Activated B cell treated with CpG ODN at 0.5 μM for 24 hours (primary cell): ENCODE measurements at regions of chr15 and their contacts with region 1.

Region 1: DNA sequence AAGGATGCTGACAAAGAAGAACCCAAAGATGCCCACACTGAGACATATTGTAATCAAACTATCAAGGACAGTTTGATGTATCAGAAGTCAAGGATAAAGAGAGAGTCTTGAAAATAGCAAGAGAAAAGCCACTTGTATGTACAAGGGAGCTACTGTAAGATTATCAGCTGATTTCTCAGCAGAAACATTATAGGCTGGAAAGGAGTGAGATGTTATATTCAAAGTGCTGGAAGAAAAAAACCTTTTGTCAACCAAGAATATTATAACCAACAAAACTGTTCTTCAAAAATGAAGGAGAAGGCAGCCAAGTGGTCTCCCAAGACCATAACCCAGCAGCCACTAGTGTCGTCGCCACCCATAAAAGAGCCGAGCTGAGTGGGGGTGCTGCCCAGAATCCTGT is 93.2 kb downstream of the KLF13 start:
- DNase-seq: no peak
- ATAC-seq: no peak
- H3K4me3 Mint-ChIP-seq: no peak overlapping the region
- H3K27ac Mint-ChIP-seq: no peak overlapping the region
- H3K4me1 Mint-ChIP-seq: no peaks in the 10 kb centered on the region
- H3K27me3 Mint-ChIP-seq: no peaks in the 10 kb centered on the region
- CTCF ChIP-seq: no peak

Region 2: DNA sequence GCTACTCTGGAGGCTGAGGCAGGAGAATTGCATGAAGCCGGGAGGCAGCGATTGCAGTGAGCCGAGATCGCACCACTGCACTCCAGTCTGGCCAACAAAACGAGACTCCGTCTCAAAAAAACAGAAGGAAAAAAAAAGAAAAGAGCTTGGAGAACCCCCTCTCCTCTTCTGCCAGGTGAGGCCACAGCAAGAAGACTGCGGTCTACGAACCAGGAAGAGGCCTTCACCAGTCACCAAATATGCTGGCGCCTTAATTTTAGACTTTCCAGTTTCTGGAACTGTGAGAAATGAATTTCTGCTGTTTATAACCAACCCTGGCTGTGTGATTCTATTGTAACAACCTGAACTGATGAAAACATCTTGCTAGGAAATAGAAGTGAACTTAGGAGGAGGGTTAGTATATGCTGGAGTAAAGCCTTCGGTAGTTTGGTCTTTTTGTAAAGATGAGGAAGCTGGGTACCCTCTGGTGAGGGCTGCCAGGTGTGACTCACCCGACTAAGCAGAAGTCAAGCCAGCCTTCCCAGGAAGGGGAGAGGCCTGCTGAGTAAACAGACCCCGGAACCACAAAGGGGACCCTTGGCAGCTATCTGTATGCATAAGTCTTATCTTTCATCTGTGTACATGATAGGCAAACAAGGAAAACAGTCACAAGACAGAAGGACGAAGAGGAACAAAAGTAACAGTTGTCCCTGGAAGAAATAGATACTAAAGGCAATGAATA is 14.5 kb before region 1 on chr15:
- CTCF ChIA-PET with region 1: no interaction called
- POLR2A ChIA-PET with region 1: interaction called, 6 read pairs
- intact Hi-C with region 1: loop called (anchors 2 kb)
- DNase-seq: no peak
- ATAC-seq: peak; percentile 80
- H3K4me3 Mint-ChIP-seq: no peak overlapping the region
- H3K27ac Mint-ChIP-seq: peak overlapping the region; percentile 69
- H3K4me1 Mint-ChIP-seq: peaks cover 18% of the 10 kb centered on the region
- H3K27me3 Mint-ChIP-seq: peaks cover 6% of the 10 kb centered on the region
- CTCF ChIP-seq: no peak

Region 3: GRCh38 chr15:31792611-31793385 is 373.0 kb after region 1 on chr15:
- CTCF ChIA-PET with region 1: no interaction called
- POLR2A ChIA-PET with region 1: no interaction called
- intact Hi-C with region 1: no loop called
- DNase-seq: no peak
- ATAC-seq: no peak
- H3K4me3 Mint-ChIP-seq: no peak overlapping the region
- H3K27ac Mint-ChIP-seq: no peak overlapping the region
- H3K4me1 Mint-ChIP-seq: no peaks in the 10 kb centered on the region
- H3K27me3 Mint-ChIP-seq: no peaks in the 10 kb centered on the region
- CTCF ChIP-seq: no peak